Activated CD4-positive, alpha-beta T cell treated with anti-CD3 and anti-CD28 coated beads for 36 hours (primary cell): ENCODE measurements at regions of chr2 and their contacts with region 1.

Region 1: GRCh38 chr2:160109936-160110673 is 47.7 kb upstream of the PLA2R1 start:
- DNase-seq: peak; percentile 74
- ATAC-seq: peak; percentile 82
- H3K4me3 Mint-ChIP-seq: no peak overlapping the region
- H3K27ac Mint-ChIP-seq: no peak overlapping the region
- H3K4me1 Mint-ChIP-seq: no peaks in the 10 kb centered on the region
- H3K27me3 Mint-ChIP-seq: peaks cover 4% of the 10 kb centered on the region

Region 2: GRCh38 chr2:160210599-160211138 is 100.6 kb after region 1 on chr2:
- CTCF ChIA-PET with region 1: interaction called, 17 read pairs
- POLR2A ChIA-PET with region 1: no interaction called
- intact Hi-C with region 1: loop called (anchors 1 kb)
- DNase-seq: peak; percentile 88
- ATAC-seq: peak; percentile 90
- H3K4me3 Mint-ChIP-seq: no peak overlapping the region
- H3K27ac Mint-ChIP-seq: no peak overlapping the region
- H3K4me1 Mint-ChIP-seq: peaks cover 33% of the 10 kb centered on the region
- H3K27me3 Mint-ChIP-seq: peaks cover 6% of the 10 kb centered on the region

Region 3: GRCh38 chr2:160387558-160388262 is 277.6 kb after region 1 on chr2:
- CTCF ChIA-PET with region 1: no interaction called
- POLR2A ChIA-PET with region 1: no interaction called
- intact Hi-C with region 1: no loop called
- DNase-seq: no peak
- ATAC-seq: peak; percentile 31
- H3K4me3 Mint-ChIP-seq: peak overlapping the region; percentile 51
- H3K27ac Mint-ChIP-seq: peak overlapping the region; percentile 89
- H3K4me1 Mint-ChIP-seq: peaks cover 76% of the 10 kb centered on the region
- H3K27me3 Mint-ChIP-seq: no peaks in the 10 kb centered on the region

Region 4: GRCh38 chr2:160970052-160970965 is 860.2 kb after region 1 on chr2:
- CTCF ChIA-PET with region 1: interaction called, 5 read pairs
- POLR2A ChIA-PET with region 1: no interaction called
- intact Hi-C with region 1: loop called in 1 of 2 experiments (anchors 5 kb)
- DNase-seq: peak; percentile 20
- ATAC-seq: no peak
- H3K4me3 Mint-ChIP-seq: no peak overlapping the region
- H3K27ac Mint-ChIP-seq: no peak overlapping the region
- H3K4me1 Mint-ChIP-seq: peaks cover 5% of the 10 kb centered on the region
- H3K27me3 Mint-ChIP-seq: peaks cover 1% of the 10 kb centered on the region

Region 5: GRCh38 chr2:160994141-160995002 is 884.3 kb after region 1 on chr2:
- CTCF ChIA-PET with region 1: interaction called, 28 read pairs
- POLR2A ChIA-PET with region 1: no interaction called
- intact Hi-C with region 1: loop called (anchors 1 kb)
- DNase-seq: peak; percentile 79
- ATAC-seq: peak; percentile 94
- H3K4me3 Mint-ChIP-seq: no peak overlapping the region
- H3K27ac Mint-ChIP-seq: no peak overlapping the region
- H3K4me1 Mint-ChIP-seq: peaks cover 10% of the 10 kb centered on the region
- H3K27me3 Mint-ChIP-seq: no peaks in the 10 kb centered on the region